ENCODE measurements at regions of chr14 and their contacts with region 1.

Region 1: DNA sequence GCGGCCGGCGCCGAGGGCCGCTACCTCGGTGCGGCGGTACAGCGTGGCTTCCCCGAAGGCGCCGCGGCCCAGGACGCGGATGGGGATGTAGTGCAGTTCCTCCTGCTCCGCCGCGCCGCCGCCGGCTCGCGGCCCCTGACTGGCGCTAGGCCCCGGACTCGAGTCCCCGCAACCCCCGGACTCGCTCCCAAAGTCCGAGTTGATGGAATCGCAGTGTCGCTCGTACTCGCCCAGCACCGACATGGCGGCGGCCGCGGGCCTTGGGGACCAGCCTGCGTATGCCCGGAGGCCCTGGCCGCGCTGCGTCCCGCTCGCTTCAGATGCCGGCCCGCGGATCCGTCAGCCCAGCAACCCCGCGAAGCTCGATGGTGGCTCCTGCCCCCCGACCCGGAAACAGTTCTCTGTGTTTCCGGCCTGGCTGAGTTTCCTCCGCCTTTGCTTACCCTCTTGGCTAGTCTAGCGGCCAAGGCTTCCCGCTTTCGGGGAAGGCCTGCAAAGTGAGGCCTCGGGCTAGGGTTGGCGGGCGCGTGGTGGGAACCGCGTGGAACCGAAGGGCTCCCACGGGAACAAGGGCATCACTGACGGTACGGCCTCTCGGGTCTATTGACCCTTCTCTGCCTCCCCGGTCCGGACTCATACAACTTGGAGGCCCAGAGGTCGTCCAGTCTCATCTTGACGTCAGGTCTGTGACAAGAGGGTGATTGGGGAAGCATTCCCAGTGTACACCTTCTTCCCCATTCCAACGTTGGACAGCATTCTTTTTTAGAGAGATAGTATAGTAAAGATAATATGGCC is at the start of gene NEK9:
- DNase-seq: peak; percentile 88 to 98
- H3K4me3 ChIP-seq: peak within 1 kb of the TSS; percentile 64
- H3K27ac ChIP-seq: peak within 1 kb of the TSS; percentile 85
- H3K4me1 ChIP-seq: peaks cover 47% of the 10 kb centered on the region
- H3K27me3 ChIP-seq: no peaks in the 10 kb centered on the region
- CTCF ChIP-seq: no peak
- total RNA-seq, gene NEK9: 170 and 174 TPM in 2 replicates

Region 2: GRCh38 chr14:74712499-74713394 is 414.1 kb before region 1 on chr14 and contains the starts of genes AREL1 and FCF1:
- CTCF ChIA-PET with region 1: no interaction called
- POLR2A ChIA-PET with region 1: interaction called, 11 read pairs
- intact Hi-C with region 1: no loop called
- DNase-seq: peak; percentile 86 to 92
- H3K4me3 ChIP-seq: peak within 1 kb of the TSS; percentile 67
- H3K27ac ChIP-seq: peak within 1 kb of the TSS; percentile 27; the same call in 1 of the 2 replicates
- H3K4me1 ChIP-seq: peaks cover 21% of the 10 kb centered on the region
- H3K27me3 ChIP-seq: no peaks in the 10 kb centered on the region
- CTCF ChIP-seq: no peak
- total RNA-seq, gene AREL1: 98.4 and 108 TPM in 2 replicates
- total RNA-seq, gene FCF1: 175 and 191 TPM in 2 replicates

Region 3: DNA sequence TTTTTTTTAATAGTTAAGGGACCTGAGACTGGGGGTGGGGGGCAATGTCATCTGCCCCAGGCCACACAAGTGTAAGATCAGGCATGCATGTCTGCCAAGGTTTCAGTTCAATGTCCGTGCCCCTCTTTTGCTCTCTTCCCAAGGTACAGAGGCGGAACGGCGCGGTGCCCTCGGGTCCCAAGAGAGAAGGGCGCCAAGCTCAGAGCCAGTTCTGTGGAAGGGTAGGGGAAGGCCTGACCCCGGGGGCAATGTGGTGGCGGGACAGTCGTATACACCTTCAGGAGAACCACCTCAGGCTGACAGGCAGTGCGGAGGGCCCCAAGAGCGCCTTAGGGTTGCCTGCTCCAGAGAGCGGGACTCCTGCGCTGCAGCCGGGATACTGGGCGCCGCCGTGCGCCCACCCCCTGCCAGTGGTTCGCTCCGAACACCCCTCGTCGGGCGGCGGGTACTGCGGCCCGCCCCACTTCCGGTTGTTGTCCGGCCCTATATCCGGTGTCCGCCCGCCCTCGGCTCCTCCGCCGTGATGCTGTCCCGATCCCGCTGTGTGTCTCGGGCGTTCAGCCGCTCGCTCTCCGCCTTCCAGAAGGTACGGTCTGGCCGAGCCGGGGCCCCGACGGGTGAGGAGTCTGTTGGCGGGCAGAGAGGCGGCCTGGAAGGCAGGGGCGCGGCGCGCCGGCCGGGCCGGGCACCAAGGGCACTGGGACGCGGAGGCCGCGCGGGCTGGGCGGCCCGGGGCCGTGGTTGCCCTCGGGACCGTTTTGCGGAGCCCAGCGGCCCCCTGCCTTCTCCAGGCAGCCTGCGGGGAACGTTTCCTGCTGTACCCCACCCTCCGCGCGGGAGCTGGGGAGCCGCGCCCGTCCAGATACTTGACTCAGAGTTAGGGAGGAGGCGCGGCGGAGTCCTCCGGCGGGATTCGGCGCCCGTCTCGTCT is 245.2 kb before region 1 on chr14 and contains the start of gene DLST:
- CTCF ChIA-PET with region 1: no interaction called
- POLR2A ChIA-PET with region 1: interaction called, 10 read pairs
- intact Hi-C with region 1: no loop called
- DNase-seq: peak; percentile 78 to 99
- H3K4me3 ChIP-seq: peak within 1 kb of the TSS; percentile 75
- H3K27ac ChIP-seq: peak within 1 kb of the TSS; percentile 17
- H3K4me1 ChIP-seq: peaks cover 49% of the 10 kb centered on the region
- H3K27me3 ChIP-seq: no peaks in the 10 kb centered on the region
- CTCF ChIP-seq: no peak
- total RNA-seq, gene DLST: 309 and 320 TPM in 2 replicates

Region 4: GRCh38 chr14:75096959-75097358 is 29.9 kb before region 1 on chr14:
- CTCF ChIA-PET with region 1: interaction called, 12 read pairs
- POLR2A ChIA-PET with region 1: no interaction called
- intact Hi-C with region 1: no loop called
- DNase-seq: no peak
- H3K4me3 ChIP-seq: no peak overlapping the region
- H3K27ac ChIP-seq: no peak overlapping the region
- H3K4me1 ChIP-seq: no peaks in the 10 kb centered on the region
- H3K27me3 ChIP-seq: no peaks in the 10 kb centered on the region
- CTCF ChIP-seq: no peak

Region 5: GRCh38 chr14:75278422-75279161 is 151.7 kb after region 1 on chr14 and contains the start of gene FOS:
- CTCF ChIA-PET with region 1: interaction called, 3 read pairs
- POLR2A ChIA-PET with region 1: interaction called, 12 read pairs
- intact Hi-C with region 1: loop called (anchors 1 kb)
- DNase-seq: peak; percentile 92 to 98
- H3K4me3 ChIP-seq: peak within 1 kb of the TSS; percentile 90
- H3K27ac ChIP-seq: peak within 1 kb of the TSS; percentile 95
- H3K4me1 ChIP-seq: peaks cover 51% of the 10 kb centered on the region
- H3K27me3 ChIP-seq: no peaks in the 10 kb centered on the region
- CTCF ChIP-seq: no peak
- total RNA-seq, gene FOS: 84.6 and 154 TPM in 2 replicates

Region 6: DNA sequence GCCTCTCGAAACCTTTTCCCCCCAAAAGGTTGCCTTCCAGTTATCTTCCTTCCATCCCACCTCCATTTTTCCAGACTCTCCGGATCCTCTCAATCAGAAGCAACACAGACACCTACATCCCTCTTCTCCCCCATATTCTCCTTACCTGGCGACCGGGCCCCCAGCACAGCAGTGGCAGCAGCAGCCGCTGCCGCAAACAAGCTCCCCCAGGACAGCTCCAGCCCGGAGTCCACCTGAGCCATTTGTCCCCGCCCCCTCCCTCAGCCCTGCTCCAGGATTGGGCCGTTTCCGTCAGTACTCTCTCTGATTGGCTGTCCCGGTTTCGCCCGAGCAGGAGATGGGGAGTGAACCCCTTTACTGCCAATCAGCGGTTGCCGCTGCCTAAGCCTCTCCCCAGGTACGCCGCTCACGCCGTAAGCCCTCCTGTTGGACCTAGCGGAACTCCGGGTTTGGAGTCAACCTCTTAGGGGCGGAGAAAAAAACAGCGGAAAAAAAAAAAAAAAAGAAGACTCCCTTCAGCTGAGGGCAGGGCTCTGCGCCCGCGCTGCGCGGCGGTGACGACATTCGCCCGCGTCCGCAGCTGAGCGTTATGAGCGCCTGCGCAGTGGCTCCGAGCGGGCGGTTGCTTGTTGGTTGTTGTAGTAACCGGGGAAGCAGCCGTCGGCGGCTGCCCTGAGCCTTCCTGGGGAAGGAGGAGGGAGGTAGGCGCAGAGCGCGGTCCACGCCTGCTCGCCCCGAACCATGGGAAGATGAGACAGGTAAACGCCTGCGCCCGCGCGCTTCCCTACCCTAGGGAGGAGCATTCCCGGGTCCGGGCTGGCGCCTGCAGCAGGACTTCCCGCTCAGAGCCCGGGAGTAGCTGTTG is 534.0 kb after region 1 on chr14 and contains the starts of genes ERG28 and TTLL5:
- CTCF ChIA-PET with region 1: no interaction called
- POLR2A ChIA-PET with region 1: interaction called, 3 read pairs
- intact Hi-C with region 1: loop called (anchors 5 kb)
- DNase-seq: peak; percentile 97 to 99
- H3K4me3 ChIP-seq: peak within 1 kb of the TSS; percentile 99
- H3K27ac ChIP-seq: peak within 1 kb of the TSS; percentile 64
- H3K4me1 ChIP-seq: peaks cover 9% of the 10 kb centered on the region; the same call in 1 of the 2 replicates
- H3K27me3 ChIP-seq: no peaks in the 10 kb centered on the region
- CTCF ChIP-seq: no peak
- total RNA-seq, gene ERG28: 25.2 and 32.5 TPM in 2 replicates
- total RNA-seq, gene TTLL5: 60.3 and 75.3 TPM in 2 replicates

Region 7: DNA sequence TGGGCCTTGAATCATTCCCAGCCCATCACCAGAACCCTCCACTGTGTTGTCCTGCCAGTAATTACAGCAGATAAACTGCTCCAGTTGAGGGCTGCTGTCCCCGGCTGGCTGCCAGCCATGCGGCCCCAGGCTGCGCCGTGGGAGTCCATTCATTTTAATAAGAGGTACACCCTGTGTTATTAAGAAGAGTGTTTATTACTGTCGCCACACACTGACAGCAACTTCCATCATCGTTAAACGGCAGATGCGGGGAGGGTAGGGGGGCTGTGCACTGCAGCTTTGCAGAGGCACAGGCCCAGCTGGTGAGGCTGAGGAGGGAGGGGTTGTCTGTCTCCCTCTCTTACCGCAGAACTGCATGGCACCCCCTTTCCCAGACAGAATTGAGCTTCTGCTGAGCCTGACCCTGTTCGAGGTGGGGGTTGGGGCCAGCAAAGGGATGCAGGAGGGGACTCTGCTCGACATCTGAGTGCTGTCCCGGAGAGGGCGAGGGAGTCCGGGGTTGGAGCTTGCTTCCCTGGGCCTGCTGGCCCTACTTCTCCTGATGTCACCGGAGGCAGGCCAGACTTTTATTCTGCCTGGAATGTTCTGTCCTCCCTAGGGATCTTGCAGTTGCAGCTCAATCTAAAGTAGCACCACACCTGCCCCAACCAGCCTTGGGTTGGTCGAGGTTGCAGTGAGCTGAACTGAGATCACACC is 991.1 kb after region 1 on chr14:
- CTCF ChIA-PET with region 1: interaction called, 10 read pairs
- POLR2A ChIA-PET with region 1: no interaction called
- intact Hi-C with region 1: no loop called
- DNase-seq: no peak
- H3K4me3 ChIP-seq: no peak overlapping the region
- H3K27ac ChIP-seq: no peak overlapping the region
- H3K4me1 ChIP-seq: no peaks in the 10 kb centered on the region
- H3K27me3 ChIP-seq: peaks cover 93% of the 10 kb centered on the region
- CTCF ChIP-seq: no peak